ENCODE measurements at regions of chr12 and their contacts with region 1.

Region 1: DNA sequence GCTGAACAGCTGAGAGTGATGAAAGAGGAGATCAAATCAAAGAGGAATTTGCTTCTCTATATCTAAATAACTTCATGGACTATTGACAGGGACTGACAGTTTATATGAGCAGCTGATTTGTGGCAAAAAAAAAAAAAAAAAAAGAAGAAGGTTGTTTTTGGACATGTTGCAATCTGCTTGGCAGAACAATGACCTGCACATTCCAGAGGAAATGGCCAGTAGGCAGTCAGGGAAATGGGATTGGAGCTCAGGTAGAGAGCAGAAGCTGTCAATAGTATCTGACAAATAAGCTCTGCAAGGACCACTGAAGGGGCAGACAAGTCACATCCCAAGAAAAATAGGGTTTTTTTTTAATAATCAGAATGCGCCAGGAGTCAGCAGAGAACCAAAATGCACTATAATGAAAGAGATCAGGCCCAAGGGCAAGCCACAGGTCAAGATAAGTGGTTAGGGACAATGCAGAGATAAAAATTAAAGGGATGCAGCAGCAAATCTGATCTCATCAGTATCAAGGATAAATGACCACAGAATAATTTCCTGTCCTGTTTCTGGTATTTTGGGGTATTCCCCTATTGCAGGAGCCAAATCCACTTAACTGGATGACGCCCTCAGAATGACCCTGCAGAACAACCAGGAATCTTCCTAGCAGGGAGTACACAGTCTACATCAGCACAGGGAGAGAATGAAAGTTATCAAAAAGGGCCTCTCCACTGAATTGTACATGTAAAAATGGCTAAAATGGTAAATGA is 22.6 kb upstream of the DUSP16 start:
- DNase-seq: no peak
- ATAC-seq: no peak
- H3K4me3 ChIP-seq: no peak overlapping the region
- H3K27ac ChIP-seq: no peak overlapping the region
- H3K4me1 ChIP-seq: no peaks in the 10 kb centered on the region
- H3K27me3 ChIP-seq: no peaks in the 10 kb centered on the region
- CTCF ChIP-seq: no peak

Region 2: DNA sequence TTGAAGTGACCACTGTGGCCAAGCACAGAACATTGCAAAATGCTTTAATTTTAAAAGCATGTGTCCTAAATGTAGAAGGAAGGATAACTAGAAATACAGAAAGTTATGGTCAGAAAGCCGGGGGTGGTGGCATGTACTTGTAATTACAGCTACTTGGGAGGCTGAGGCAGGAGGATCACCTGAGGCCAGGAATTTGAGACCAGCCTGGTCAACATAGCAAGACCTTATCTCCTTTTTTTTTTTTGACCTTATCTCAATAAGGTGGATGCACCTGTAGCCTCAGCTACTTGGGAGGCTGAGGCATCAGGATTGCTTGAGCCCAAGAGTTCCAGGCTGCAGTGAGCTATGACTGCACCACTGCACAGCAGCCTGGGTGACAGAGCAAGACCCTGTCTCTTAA is 194.9 kb before region 1 on chr12:
- CTCF ChIA-PET with region 1: no interaction called
- POLR2A ChIA-PET with region 1: interaction called, 10 read pairs
- in situ Hi-C with region 1: no loop called
- intact Hi-C with region 1: no loop called
- DNase-seq: no peak
- ATAC-seq: no peak
- H3K4me3 ChIP-seq: no peak overlapping the region
- H3K27ac ChIP-seq: no peak overlapping the region
- H3K4me1 ChIP-seq: no peaks in the 10 kb centered on the region
- H3K27me3 ChIP-seq: no peaks in the 10 kb centered on the region
- CTCF ChIP-seq: no peak